ENCODE measurements at regions of chr19 and their contacts with region 1.

Region 1: GRCh38 chr19:55258828-55259539 is at the start of gene PPP6R1:
- DNase-seq: peak; percentile 96
- H3K4me3 Mint-ChIP-seq: peak within 1 kb of the TSS; percentile 93
- H3K27ac Mint-ChIP-seq: peak within 1 kb of the TSS; percentile 98
- H3K4me1 Mint-ChIP-seq: peaks cover 30% of the 10 kb centered on the region
- H3K27me3 Mint-ChIP-seq: no peaks in the 10 kb centered on the region
- total RNA-seq, gene PPP6R1: 180 to 200 TPM

Region 2: GRCh38 chr19:55178781-55179599 is 80.0 kb before region 1 on chr19:
- CTCF ChIA-PET with region 1: no interaction called
- POLR2A ChIA-PET with region 1: no interaction called
- intact Hi-C with region 1: loop called (anchors 10 kb)
- DNase-seq: peak; percentile 92
- H3K4me3 Mint-ChIP-seq: peak overlapping the region; percentile 51
- H3K27ac Mint-ChIP-seq: no peak overlapping the region
- H3K4me1 Mint-ChIP-seq: peaks cover 18% of the 10 kb centered on the region
- H3K27me3 Mint-ChIP-seq: peaks cover 59% of the 10 kb centered on the region

Region 3: DNA sequence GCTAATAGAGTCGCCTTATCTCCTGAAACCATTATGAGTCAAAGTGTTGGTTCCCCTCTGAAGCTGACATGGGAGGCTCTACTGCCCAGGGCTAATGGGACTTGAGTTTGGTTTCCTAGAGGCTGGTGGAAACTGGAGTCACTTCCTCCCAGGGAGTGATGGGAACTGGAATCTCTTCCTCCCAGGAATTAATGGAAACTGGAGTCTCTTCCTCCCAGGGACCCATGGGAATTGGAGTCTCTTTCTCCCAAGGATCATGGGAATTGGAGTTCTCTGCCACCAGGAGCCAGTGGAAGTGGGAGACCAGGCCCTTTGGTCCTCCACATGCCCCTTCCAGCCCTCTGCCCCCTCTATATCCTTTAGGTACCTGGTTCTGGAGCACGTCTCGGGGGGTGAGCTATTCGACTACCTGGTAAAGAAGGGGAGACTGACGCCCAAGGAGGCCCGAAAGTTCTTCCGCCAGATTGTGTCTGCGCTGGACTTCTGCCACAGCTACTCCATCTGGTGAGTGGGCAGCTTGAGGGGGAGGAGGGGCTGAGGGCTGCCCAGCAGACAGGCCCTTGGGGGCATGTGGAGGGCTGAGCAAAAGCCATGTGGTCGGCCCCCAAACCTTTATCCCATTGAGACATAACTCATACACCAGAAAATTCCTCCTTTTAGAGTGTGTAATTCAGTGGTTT is 30.3 kb after region 1 on chr19:
- CTCF ChIA-PET with region 1: interaction called, 5 read pairs
- POLR2A ChIA-PET with region 1: interaction called, 4 read pairs
- intact Hi-C with region 1: loop called (anchors 5 kb)
- DNase-seq: no peak
- H3K4me3 Mint-ChIP-seq: no peak overlapping the region
- H3K27ac Mint-ChIP-seq: no peak overlapping the region
- H3K4me1 Mint-ChIP-seq: no peaks in the 10 kb centered on the region
- H3K27me3 Mint-ChIP-seq: no peaks in the 10 kb centered on the region

Region 4: DNA sequence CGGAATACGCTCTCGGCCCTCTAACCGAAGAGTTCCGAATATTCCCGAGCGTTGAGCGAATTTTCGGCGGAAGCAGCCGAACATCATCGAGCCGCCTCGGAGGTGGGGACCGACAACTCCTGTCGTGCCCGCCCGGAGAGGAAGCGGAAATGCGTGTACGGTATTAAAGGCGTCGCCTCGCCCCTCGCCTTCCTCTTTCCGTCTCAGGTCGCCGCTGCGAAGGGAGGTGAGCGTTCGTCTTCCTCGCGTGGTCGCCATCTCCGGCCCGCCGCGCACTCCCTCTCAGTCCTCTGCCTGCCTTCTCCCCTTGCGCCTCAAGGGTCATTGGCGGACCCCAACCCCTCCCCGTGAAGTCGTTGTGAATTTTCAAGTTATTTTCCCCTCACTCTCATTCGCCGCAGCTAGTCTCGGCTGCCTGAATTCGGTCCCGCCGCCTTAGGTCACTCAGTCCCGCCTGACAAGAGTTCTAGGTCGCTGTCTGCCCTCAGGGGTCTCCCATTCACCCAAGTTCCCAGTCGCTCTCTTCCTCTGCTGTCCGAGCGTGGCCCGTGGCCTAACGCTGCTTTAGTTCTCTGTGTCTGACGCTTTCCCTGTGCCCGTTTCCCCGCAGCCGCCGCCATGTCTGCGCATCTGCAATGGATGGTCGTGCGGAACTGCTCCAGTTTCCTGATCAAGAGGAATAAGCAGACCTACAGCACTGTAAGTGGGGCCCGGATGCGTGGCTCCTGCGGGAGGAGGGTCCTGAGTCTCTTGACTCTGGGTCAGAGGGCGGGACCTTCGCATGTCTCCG is 127.0 kb after region 1 on chr19 and contains the start of gene RPL28:
- CTCF ChIA-PET with region 1: interaction called, 4 read pairs
- POLR2A ChIA-PET with region 1: interaction called, 20 read pairs
- intact Hi-C with region 1: loop called (anchors 1 kb)
- DNase-seq: peak; percentile 99
- H3K4me3 Mint-ChIP-seq: peak within 1 kb of the TSS; percentile 96
- H3K27ac Mint-ChIP-seq: peak within 1 kb of the TSS; percentile 92
- H3K4me1 Mint-ChIP-seq: peaks cover 59% of the 10 kb centered on the region
- H3K27me3 Mint-ChIP-seq: no peaks in the 10 kb centered on the region
- total RNA-seq, gene RPL28: 2,630 to 2,642 TPM

Region 5: GRCh38 chr19:55476100-55476775 is 217.3 kb after region 1 on chr19 and contains the start of gene ZNF628:
- CTCF ChIA-PET with region 1: interaction called, 3 read pairs
- POLR2A ChIA-PET with region 1: interaction called, 4 read pairs
- intact Hi-C with region 1: loop called (anchors 2 kb)
- DNase-seq: peak; percentile 99
- H3K4me3 Mint-ChIP-seq: peak within 1 kb of the TSS; percentile 88
- H3K27ac Mint-ChIP-seq: peak within 1 kb of the TSS; percentile 91
- H3K4me1 Mint-ChIP-seq: peaks cover 19% of the 10 kb centered on the region
- H3K27me3 Mint-ChIP-seq: no peaks in the 10 kb centered on the region
- total RNA-seq, gene ZNF628: 5.8 to 6.9 TPM

Region 6: DNA sequence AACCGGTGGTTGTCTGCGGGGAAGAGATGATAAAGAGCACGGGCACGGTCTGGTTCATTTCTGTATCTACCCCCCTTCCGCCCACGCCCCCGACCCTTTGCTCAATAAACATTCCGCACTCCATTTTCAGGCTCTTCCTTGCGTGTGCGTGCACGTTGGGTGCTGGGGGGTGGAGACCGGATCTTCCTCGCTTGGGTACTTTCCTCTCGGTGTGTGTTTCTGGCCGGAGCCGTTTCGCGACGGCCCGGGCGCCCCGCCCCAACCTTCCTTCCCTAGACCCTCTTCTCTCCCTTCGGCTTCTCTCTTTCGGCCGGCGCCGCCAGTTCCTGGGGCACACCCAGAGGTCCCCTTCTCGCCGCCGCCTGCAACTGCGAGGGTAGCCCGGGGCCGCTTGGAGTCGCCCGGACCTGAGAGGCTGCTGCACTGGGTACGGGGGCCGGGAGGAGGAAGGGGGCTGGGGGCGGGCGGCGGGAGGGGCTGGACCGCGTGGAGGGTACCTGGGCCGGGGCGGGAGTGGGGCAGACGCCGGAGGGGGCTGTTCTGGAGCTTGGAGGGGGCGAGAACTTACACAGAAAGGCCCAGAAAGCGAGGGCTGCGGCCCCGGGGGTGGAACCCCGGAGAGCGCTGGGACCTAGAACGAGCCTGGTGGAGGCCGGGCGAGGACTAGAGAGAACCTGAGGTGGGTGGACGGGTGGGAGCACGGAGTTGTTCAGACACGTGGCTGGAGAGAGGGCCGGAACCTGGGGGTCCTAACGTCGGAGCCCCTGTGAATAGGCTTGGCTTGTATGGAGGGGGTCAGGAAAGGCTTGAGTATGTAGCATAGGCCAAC is 384.6 kb after region 1 on chr19 and contains the start of gene ZNF581:
- CTCF ChIA-PET with region 1: no interaction called
- POLR2A ChIA-PET with region 1: interaction called, 3 read pairs
- intact Hi-C with region 1: loop called (anchors 5 kb)
- DNase-seq: peak; percentile 90
- H3K4me3 Mint-ChIP-seq: peak within 1 kb of the TSS; percentile 85
- H3K27ac Mint-ChIP-seq: peak within 1 kb of the TSS; percentile 98
- H3K4me1 Mint-ChIP-seq: peaks cover 46% of the 10 kb centered on the region
- H3K27me3 Mint-ChIP-seq: no peaks in the 10 kb centered on the region
- total RNA-seq, gene ZNF581: 19.2 to 20.1 TPM

Measured in activated CD4-positive, alpha-beta memory T cell treated with anti-CD3 and anti-CD28 coated beads for 36 hours (primary cell).